ENCODE measurements at regions of chr2 and their contacts with region 1.

Region 1: DNA sequence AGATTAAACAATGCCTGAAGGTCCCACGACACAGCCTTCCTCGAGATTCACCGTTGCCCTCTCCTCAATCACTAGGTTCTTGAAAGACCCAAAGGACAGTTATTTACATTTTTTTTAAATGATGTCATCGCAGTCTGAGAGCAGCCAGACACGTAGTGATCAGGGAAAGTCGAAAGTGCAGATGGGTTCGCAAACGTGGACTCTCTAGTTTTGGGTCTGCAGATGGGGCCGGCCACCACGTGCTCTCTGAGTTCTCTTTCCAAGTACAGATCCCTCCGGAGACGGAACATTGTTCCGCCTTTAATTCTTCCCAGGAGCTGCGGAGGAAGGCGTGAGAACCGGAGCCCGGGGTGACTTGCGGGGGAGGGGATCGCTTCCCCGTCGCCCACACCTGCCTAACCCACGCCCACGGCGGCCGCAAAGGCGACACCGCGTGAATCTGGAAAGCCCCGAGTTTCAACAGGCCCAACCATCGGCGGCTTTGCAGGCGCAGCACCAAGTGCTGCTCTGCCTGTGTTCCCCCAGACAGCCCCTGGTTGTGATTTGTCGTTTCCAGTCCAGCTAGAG is 54.3 kb downstream of the PKDCC start:
- DNase-seq: peak; percentile 86
- H3K4me3 ChIP-seq: peak overlapping the region in 3 of 4 donors; percentile 47 to 58 (median 49)
- H3K27ac ChIP-seq: peak overlapping the region; percentile 77 to 89 (median 82)
- H3K4me1 ChIP-seq: peaks cover 0 to 33% (median 20%) of the 10 kb centered on the region in 4 donors
- H3K27me3 ChIP-seq: no peaks in the 10 kb centered on the region
- CTCF ChIP-seq: no peak
- EP300 ChIP-seq: peak in 1 of 4 donors; percentile 41
- POLR2A ChIP-seq: no peak

Region 2: DNA sequence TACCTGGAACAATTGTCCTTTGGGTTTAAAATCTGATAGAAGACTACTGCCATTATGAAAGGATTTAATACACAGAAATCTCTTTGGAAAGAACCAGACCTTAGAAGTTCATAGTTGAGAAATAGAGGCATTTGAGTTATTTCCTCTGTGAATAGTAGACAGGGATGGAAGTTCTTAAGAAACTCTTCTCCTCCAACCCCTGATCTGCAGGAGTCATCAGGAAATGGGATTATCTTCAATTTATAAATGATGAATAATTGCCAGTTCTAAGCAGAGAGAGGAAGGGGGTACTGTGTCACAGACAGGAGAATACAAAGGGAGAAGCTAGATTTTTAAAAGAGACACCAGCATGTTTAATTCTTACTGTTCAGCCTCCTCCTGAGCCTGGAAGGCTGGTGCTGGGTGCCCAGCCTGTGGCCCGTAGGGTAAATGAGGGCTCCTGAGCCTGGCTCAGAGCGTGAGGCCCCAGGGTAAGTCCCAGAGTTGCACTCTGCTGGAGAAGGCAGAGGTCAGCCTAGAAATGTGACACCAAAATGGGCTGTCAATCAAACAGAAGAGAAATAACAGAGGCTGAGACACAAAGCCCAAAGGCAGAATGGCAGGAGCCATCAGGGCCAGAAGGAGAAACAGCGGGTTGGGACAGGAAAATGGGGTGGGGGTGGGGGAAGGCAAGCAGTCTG is 112.5 kb before region 1 on chr2:
- intact Hi-C with region 1: no loop called
- DNase-seq: no peak
- H3K4me3 ChIP-seq: no peak overlapping the region
- H3K27ac ChIP-seq: no peak overlapping the region
- H3K4me1 ChIP-seq: no peaks in the 10 kb centered on the region
- H3K27me3 ChIP-seq: no peaks in the 10 kb centered on the region
- CTCF ChIP-seq: no peak
- EP300 ChIP-seq: no peak
- POLR2A ChIP-seq: no peak

Region 3: GRCh38 chr2:42141687-42142546 is 39.8 kb after region 1 on chr2:
- intact Hi-C with region 1: no loop called
- DNase-seq: peak; percentile 75
- H3K4me3 ChIP-seq: peak overlapping the region in 3 of 4 donors; percentile 14 to 22 (median 15)
- H3K27ac ChIP-seq: peak overlapping the region; percentile 61 to 71 (median 68)
- H3K4me1 ChIP-seq: peaks cover 0 to 53% (median 46%) of the 10 kb centered on the region in 4 donors
- H3K27me3 ChIP-seq: no peaks in the 10 kb centered on the region
- CTCF ChIP-seq: no peak
- EP300 ChIP-seq: no peak
- POLR2A ChIP-seq: no peak

Region 4: DNA sequence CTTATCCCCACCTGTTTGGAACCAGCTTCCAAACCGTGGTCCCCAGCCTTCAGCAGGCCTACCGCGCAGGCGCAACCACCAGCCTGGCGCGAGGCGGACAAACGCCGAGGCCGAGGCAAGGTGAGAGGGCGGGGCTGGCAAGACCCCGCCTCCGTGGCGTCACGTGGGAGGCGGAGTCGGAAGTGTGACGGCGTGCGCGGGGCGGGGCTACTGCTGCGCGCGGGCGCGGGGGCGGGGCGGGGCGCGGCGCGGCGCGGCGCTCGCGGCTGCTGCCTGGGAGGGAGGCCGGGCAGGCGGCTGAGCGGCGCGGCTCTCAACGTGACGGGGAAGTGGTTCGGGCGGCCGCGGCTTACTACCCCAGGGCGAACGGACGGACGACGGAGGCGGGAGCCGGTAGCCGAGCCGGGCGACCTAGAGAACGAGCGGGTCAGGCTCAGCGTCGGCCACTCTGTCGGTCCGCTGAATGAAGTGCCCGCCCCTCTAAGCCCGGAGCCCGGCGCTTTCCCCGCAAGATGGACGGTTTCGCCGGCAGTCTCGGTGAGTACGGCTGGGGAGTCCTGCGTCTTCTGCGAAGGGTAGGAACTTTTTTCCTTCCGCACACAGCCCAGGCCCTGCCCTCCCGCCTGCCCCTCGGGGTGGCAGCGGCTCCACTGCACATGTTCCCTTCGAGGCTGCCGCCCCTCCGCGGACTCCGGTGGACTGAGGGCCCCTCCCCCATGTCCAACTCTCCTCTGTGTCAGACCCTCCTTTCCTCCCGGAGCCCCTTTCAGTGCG is 67.2 kb after region 1 on chr2 and contains the start of gene EML4:
- intact Hi-C with region 1: loop called (anchors 2 kb)
- DNase-seq: peak; percentile 96
- H3K4me3 ChIP-seq: peak within 1 kb of the TSS; percentile 68 to 95 (median 82)
- H3K27ac ChIP-seq: peak within 1 kb of the TSS; percentile 85 to 95 (median 92)
- H3K4me1 ChIP-seq: peaks cover 0 to 48% (median 37%) of the 10 kb centered on the region in 4 donors
- H3K27me3 ChIP-seq: no peaks in the 10 kb centered on the region
- CTCF ChIP-seq: no peak
- EP300 ChIP-seq: no peak
- POLR2A ChIP-seq: peak; percentile 65
- total RNA-seq, gene EML4: 16.1 to 23.8 (median 20.6) TPM

Region 5: GRCh38 chr2:42360890-42361727 is 259.0 kb after region 1 on chr2 and contains the start of gene COX7A2L:
- intact Hi-C with region 1: loop called (anchors 2 kb)
- DNase-seq: peak; percentile 98
- H3K4me3 ChIP-seq: peak within 1 kb of the TSS; percentile 75 to 97 (median 94)
- H3K27ac ChIP-seq: peak within 1 kb of the TSS; percentile 88 to 94 (median 92)
- H3K4me1 ChIP-seq: peaks cover 0 to 32% (median 17%) of the 10 kb centered on the region in 4 donors
- H3K27me3 ChIP-seq: no peaks in the 10 kb centered on the region
- CTCF ChIP-seq: peak in 1 of 4 experiments; percentile 9
- EP300 ChIP-seq: peak in 1 of 4 donors; percentile 37
- POLR2A ChIP-seq: peak; percentile 73 to 76
- total RNA-seq, gene COX7A2L: 149 to 209 (median 172) TPM

Region 6: DNA sequence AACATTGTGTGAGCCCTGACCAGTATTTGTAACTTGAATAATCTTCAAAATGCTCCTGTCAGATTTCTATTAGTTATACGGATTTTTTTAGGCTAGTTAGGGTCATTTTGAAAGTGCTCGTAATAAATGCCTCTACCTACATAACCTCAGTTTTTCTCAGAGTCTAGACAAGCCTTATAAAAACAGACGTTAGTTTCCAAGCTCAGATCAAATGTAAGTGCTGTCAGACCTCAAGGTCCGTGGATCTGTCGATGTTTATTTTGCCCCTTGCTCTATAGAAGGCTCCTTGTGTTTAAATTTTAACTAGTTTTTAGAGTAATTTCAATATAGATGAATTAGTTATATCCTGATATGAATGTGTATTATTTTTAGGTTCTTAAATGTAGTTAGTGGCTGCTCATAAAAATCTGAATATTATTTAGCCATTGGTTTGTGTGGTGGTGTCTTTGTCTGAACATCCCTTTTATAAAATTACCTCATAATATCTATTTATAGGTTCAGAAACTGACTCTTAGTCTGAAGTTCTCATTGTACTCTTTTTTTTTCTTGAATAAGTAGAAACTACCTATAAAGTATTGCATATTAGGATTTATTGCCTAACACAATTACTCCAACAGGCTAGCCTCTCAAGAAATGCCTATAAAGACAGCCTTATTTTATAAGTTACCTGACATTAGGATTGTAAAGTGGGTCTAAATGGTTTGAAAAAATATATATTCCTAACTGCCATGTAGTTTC is 537.4 kb after region 1 on chr2:
- intact Hi-C with region 1: no loop called
- DNase-seq: no peak
- H3K4me3 ChIP-seq: no peak overlapping the region
- H3K27ac ChIP-seq: no peak overlapping the region
- H3K4me1 ChIP-seq: peaks cover 0 to 10% (median 3%) of the 10 kb centered on the region in 4 donors
- H3K27me3 ChIP-seq: no peaks in the 10 kb centered on the region
- CTCF ChIP-seq: no peak
- EP300 ChIP-seq: no peak
- POLR2A ChIP-seq: no peak

Region 7: GRCh38 chr2:42859006-42859552 is 757.0 kb after region 1 on chr2:
- intact Hi-C with region 1: no loop called
- DNase-seq: peak; percentile 63
- H3K4me3 ChIP-seq: no peak overlapping the region
- H3K27ac ChIP-seq: no peak overlapping the region
- H3K4me1 ChIP-seq: peaks cover 0 to 7% (median 5%) of the 10 kb centered on the region in 4 donors
- H3K27me3 ChIP-seq: no peaks in the 10 kb centered on the region
- CTCF ChIP-seq: peak; percentile 50 to 92 (median 82)
- EP300 ChIP-seq: no peak
- POLR2A ChIP-seq: no peak